ENCODE measurements at regions of chr4 and their contacts with region 1.

Region 1: DNA sequence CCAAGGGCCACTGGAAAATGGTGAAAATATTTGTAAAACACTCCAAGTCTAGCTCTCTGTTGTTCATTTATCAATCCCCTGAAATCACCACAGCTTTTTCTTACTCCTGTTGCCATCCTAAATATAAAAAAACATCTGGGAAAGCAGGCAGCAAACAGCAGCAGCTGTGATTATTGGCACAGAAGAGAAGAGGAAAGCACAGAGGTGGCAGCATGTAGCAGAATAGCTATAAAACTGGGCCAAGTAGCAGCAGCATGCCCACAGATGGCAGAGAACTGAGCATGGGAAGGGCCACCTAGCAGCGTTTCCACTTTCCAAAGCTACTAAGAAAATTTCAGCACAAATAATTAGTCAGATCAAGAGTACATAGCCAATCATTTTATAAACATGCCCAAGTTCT is 307.2 kb downstream of the SLC7A11 start:
- DNase-seq: no peak
- ATAC-seq: no peak
- H3K4me3 ChIP-seq: no peak overlapping the region
- H3K27ac ChIP-seq: no peak overlapping the region
- H3K4me1 ChIP-seq: no peaks in the 10 kb centered on the region
- H3K27me3 ChIP-seq: no peaks in the 10 kb centered on the region
- CTCF ChIP-seq: no peak

Region 2: DNA sequence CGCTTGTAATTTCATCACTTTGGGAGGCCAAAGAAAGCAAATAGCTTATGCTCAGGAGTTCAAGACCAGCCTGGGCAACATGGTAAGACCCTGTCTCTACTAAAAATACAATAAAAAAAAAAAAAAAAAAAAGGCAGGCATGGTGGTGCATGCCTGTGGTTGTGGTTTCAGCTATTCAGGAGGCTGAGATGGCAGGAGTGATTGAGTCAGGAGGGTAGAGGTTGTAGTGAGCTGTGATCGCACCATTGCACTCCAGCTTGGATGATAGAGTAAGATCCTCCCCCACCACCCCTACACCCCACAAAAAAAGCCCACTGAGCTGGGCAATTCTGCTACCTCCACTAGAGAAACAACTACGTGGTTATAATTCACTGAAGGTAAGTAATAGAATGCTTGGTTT is 283.8 kb before region 1 on chr4:
- CTCF ChIA-PET with region 1: interaction called, 12 read pairs
- POLR2A ChIA-PET with region 1: no interaction called
- in situ Hi-C with region 1: no loop called
- intact Hi-C with region 1: no loop called
- DNase-seq: no peak
- ATAC-seq: no peak
- H3K4me3 ChIP-seq: no peak overlapping the region
- H3K27ac ChIP-seq: no peak overlapping the region
- H3K4me1 ChIP-seq: no peaks in the 10 kb centered on the region
- H3K27me3 ChIP-seq: no peaks in the 10 kb centered on the region
- CTCF ChIP-seq: no peak